ENCODE measurements at regions of chr4 and their contacts with region 1.

Region 1: GRCh38 chr4:38663801-38664705 is at the start of gene KLF3:
- DNase-seq: peak; percentile 96 to 97
- ATAC-seq: peak; percentile 86 to 90 (median 88)
- H3K4me3 ChIP-seq: peak within 1 kb of the TSS; percentile 93
- H3K27ac ChIP-seq: peak within 1 kb of the TSS; percentile 98
- H3K4me1 ChIP-seq: peaks cover 41% of the 10 kb centered on the region
- H3K27me3 ChIP-seq: no peaks in the 10 kb centered on the region
- CTCF ChIP-seq: no peak
- total RNA-seq, gene KLF3: 14.2 to 29.1 (median 18.5) TPM

Region 2: GRCh38 chr4:38190717-38191178 is 473.3 kb before region 1 on chr4:
- intact Hi-C with region 1: loop called in 1 of 2 experiments (anchors 5 kb)
- DNase-seq: peak; percentile 46 to 79
- ATAC-seq: peak; percentile 97 to 99 (median 98)
- H3K4me3 ChIP-seq: no peak overlapping the region
- H3K27ac ChIP-seq: peak overlapping the region; percentile 74
- H3K4me1 ChIP-seq: peaks cover 16% of the 10 kb centered on the region
- H3K27me3 ChIP-seq: no peaks in the 10 kb centered on the region
- CTCF ChIP-seq: no peak

Region 3: GRCh38 chr4:38574559-38575333 is 89.3 kb before region 1 on chr4:
- intact Hi-C with region 1: loop called (anchors 2 to 5 kb)
- DNase-seq: peak; percentile 63 to 79
- ATAC-seq: peak; percentile 97 to 98 (median 98)
- H3K4me3 ChIP-seq: peak overlapping the region; percentile 17
- H3K27ac ChIP-seq: peak overlapping the region; percentile 87
- H3K4me1 ChIP-seq: peaks cover 12% of the 10 kb centered on the region
- H3K27me3 ChIP-seq: no peaks in the 10 kb centered on the region
- CTCF ChIP-seq: no peak

Region 4: DNA sequence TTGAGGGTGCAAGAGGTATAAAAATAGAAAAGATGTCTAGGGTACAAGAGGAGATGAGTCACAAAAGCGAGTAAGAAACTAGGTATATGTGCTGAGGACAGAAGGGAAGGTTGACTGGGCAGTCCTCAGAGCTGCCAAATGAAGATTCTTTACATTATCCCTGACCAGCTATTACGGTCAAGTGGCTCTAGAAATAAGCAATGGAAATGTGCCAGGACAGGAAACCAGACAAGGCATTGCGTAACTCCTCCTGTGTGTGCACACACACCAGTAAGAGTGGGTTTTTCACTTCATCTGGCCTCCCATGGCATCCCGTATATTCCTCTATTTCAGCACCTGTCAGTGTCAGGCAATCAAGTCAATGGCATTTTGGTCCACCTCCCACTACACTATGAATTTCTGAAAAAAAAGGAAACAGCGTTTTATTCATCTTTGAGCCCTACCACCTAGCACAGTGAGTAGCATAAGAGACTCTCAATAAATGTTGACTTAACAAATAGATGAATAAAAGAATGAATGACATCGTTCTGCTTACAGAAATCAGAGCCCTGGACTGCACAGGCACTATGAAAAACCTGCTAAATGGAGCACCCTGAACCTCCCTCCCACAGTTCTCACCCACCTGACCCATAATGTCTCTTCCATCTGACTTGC is 62.7 kb before region 1 on chr4:
- intact Hi-C with region 1: loop called (anchors 5 kb)
- DNase-seq: no peak
- ATAC-seq: peak; percentile 66 to 83 (median 73)
- H3K4me3 ChIP-seq: no peak overlapping the region
- H3K27ac ChIP-seq: peak overlapping the region; percentile 70
- H3K4me1 ChIP-seq: peaks cover 25% of the 10 kb centered on the region
- H3K27me3 ChIP-seq: no peaks in the 10 kb centered on the region
- CTCF ChIP-seq: no peak

Region 5: DNA sequence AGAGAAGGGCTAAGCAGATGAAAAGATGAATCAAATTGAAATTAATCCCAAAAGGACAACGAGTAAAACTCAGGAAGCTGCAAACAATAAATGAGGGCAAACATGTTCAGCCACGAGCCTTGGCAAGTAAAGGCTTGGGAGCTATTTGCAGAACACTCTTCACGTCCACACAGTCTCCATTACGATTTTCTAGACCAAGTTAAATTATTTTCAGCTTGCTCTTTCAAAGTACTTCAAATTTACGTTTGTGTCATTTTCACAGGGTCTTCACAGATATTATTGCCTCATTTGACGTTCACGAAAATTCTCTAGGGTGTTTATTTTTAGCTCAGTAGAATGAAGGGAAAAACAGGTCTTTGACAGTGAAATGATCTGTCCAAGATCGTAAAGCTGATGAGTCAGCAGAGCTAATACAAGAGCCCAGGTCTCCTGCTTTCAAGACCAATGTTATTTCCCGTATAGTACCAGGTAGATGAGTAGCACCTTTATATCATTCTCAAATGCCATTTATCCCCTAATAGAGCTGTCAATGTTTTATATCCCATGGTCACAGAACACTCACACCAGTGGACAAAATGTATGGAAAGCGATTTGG is 763.6 kb after region 1 on chr4:
- intact Hi-C with region 1: no loop called
- DNase-seq: no peak
- ATAC-seq: no peak
- H3K4me3 ChIP-seq: no peak overlapping the region
- H3K27ac ChIP-seq: no peak overlapping the region
- H3K4me1 ChIP-seq: no peaks in the 10 kb centered on the region
- H3K27me3 ChIP-seq: no peaks in the 10 kb centered on the region
- CTCF ChIP-seq: no peak

Measured in psoas muscle (tissue), 8 donors.